Activated CD8-positive, alpha-beta T cell treated with anti-CD3 and anti-CD28 coated beads, Interleukin-2, amount 10 ng/mL, durations not matched to agents 7 days and 5 days (primary cell): ENCODE measurements at regions of chr19 and their contacts with region 1.

Region 1: DNA sequence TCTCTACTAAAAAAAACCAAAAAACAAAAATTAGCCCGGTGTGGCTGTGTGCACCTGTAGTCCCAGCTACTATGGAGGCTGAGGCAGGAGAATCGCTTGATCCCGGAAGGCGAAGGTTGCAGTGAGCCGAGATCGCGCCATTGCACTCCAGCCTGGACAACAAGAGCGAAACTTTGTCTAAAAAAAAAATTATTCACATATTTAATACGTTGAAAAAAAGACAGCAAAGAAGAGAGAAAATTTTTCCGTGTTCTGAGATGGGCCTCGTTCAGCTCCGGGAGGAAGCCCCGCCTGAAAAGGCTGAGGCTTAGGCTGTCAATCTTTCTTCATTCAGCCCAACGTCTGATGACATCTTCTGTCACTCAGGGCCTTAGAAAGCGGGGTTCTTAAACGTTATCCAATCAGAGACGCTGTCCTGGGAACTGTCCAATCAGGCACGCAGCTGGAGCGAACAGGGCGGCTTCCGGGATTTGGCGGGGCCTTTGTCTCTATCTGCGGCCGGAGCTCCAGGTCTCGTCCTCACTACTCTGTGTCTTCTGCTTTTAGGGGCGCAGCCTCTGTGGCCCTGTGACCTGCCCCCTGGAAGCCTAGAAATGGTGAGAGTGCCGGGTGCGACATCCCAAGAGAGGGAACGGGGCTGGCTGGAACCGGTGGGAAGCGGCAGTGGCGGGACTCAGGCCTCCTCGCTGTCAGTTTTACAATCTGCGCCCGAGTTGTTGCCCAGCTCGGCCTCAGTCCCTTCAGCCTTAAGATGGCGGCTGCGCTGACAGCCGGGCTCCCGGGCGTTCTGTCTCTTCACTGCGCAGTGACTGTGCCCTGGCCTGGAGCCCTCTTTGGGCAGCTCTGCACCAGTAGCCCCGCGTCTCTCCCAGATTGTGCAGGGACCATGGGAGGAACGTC is at the start of gene ZNF726:
- DNase-seq: peak; percentile 94
- ATAC-seq: peak; percentile 99
- H3K4me3 Mint-ChIP-seq: peak within 1 kb of the TSS; percentile 95
- H3K27ac Mint-ChIP-seq: peak within 1 kb of the TSS; percentile 99
- H3K4me1 Mint-ChIP-seq: peaks cover 23% of the 10 kb centered on the region
- H3K27me3 Mint-ChIP-seq: no peaks in the 10 kb centered on the region
- total RNA-seq, gene ZNF726: 16.6 to 16.7 TPM

Region 2: DNA sequence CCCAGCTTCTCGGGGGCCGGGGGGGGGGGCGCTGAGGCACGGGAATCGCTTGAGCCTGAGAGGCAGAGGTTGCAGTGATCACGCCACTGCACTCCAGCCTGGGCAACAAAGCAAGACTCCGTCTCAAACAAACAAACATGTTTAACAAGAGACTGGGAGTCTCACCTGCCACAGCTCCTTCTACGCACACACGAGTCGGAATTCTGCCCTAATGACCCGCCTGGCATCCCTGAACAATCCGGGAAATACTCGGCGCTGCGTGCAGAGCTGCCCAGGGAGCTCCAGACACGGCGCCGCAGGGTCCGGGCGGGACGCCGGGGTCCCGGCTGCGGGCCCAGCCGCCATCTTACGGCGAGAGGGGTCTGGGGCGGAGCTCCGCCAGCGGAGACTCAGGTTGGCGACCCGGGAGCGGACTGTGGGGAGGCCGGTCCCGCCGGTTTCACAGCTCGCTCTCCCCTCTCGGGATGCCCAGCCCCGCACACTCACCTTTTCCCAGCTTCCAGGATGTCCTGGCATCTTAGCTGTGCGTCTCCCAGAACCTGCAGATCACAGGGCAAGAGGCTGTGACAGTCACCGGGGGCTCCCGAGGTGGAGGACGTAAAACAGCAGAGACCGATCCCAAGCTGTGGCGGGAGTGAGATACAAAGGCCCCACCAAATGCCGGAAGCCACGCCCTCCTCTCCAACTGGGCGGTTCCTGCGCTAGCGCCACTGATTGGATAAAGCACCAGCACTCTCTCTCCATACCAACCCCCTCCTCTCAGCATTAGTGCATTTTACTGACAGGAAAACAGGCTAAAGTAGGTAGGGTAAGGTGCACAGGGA is 640.9 kb before region 1 on chr19:
- CTCF ChIA-PET with region 1: no interaction called
- POLR2A ChIA-PET with region 1: interaction called, 11 read pairs
- DNase-seq: peak; percentile 96
- ATAC-seq: peak; percentile 99
- H3K4me3 Mint-ChIP-seq: peak overlapping the region; percentile 95
- H3K27ac Mint-ChIP-seq: peak overlapping the region; percentile 95
- H3K4me1 Mint-ChIP-seq: peaks cover 28% of the 10 kb centered on the region
- H3K27me3 Mint-ChIP-seq: no peaks in the 10 kb centered on the region

Region 3: DNA sequence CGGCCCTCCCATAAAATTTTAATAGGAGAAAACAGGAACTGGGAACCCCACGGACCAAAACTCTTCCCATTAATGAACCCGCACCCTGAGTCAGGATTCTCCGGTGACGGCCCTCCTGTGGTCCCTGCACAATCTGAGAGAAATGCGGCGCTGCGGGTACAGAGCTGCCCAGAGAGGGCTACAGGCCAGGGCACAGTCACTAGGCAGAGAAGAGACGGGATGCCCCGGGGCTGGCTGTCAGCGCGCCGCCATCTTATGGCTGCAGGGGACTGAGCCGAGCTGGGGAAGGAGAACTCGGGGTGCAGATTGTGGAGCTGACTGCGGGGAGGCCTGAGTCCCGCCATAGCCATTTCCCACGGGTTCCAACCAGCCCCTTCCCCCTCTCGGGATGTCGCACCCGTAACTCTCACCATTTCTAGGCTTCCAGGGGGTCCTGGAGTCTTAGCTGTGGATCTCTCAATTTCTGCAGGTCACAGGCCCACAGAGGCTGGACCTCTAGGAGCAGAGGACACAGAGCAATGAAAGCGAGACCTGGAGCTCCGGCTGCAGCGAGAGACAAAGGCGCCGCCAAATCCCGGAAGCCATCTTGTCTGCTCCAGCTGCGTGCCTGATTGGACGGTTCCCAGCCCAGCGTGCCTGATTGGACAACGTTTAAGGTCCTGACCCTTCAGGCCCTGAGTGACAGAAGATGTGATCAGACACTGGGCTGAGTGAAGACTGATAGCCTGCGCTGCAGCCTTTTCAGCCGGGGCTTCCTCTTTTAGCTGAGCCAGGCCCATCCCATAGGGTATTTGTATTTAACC is 227.8 kb before region 1 on chr19 and contains the start of gene ZNF675:
- CTCF ChIA-PET with region 1: no interaction called
- POLR2A ChIA-PET with region 1: interaction called, 14 read pairs
- DNase-seq: peak; percentile 94
- ATAC-seq: peak; percentile 96
- H3K4me3 Mint-ChIP-seq: peak within 1 kb of the TSS; percentile 99
- H3K27ac Mint-ChIP-seq: peak within 1 kb of the TSS; percentile 99
- H3K4me1 Mint-ChIP-seq: peaks cover 28% of the 10 kb centered on the region
- H3K27me3 Mint-ChIP-seq: no peaks in the 10 kb centered on the region
- total RNA-seq, gene ZNF675: 23.0 to 23.6 TPM

Region 4: DNA sequence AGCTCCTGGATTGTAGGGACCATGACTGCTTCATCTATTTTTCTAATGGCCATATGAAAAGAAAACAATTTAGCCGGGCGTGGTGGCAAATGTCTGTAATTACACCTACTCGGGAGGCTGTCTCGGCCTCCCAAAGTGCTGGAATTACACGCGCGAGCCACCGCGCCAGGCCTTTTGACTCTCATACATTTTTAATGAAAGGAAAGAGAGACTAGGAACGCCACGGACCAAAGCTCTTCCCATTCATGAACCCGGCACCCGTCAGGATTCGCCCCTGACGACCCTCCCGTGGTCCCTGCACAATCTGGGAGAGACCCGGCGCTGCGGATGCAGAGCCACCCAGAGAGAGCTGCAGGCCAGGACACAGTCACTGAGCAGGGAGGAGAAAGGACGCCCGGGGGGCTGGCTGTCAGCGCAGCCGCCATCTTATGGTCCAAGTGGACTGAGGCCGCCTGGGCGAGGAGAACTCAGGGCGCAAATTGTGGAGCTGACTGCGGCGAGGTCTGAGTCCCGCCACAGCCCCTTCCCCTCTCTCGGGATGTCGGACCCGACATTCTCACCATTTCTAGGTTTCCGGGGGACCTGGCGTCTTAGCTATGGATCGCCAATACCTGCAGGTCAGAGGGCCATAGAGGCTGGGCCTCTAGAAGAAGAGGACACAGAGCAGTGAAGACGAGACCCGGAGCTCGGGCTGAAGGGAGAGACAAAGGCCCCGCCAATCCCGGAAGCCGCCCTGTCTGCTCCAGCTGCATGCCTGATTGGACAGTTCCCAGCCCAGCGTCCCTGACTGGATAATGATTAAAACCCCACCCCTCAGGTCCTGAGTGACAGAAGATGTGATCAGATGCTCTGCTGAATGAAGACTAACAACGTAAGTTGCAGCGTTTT is 156.2 kb before region 1 on chr19 and contains the start of gene ZNF681:
- CTCF ChIA-PET with region 1: no interaction called
- POLR2A ChIA-PET with region 1: interaction called, 10 read pairs
- DNase-seq: peak; percentile 94
- ATAC-seq: peak; percentile 93
- H3K4me3 Mint-ChIP-seq: peak within 1 kb of the TSS; percentile 96
- H3K27ac Mint-ChIP-seq: peak within 1 kb of the TSS; percentile 96
- H3K4me1 Mint-ChIP-seq: peaks cover 27% of the 10 kb centered on the region
- H3K27me3 Mint-ChIP-seq: no peaks in the 10 kb centered on the region
- total RNA-seq, gene ZNF681: 5.5 to 7.5 TPM

Region 5: GRCh38 chr19:24033301-24033962 is 118.8 kb after region 1 on chr19:
- CTCF ChIA-PET with region 1: no interaction called
- POLR2A ChIA-PET with region 1: interaction called, 26 read pairs
- DNase-seq: peak; percentile 88
- ATAC-seq: peak; percentile 99
- H3K4me3 Mint-ChIP-seq: peak overlapping the region; percentile 99
- H3K27ac Mint-ChIP-seq: peak overlapping the region; percentile 98
- H3K4me1 Mint-ChIP-seq: peaks cover 21% of the 10 kb centered on the region
- H3K27me3 Mint-ChIP-seq: no peaks in the 10 kb centered on the region

Region 6: GRCh38 chr19:24086974-24087595 is 172.4 kb after region 1 on chr19 and contains the start of gene ZNF254:
- CTCF ChIA-PET with region 1: no interaction called
- POLR2A ChIA-PET with region 1: interaction called, 11 read pairs
- DNase-seq: peak; percentile 94
- ATAC-seq: peak; percentile 100
- H3K4me3 Mint-ChIP-seq: peak within 1 kb of the TSS; percentile 97
- H3K27ac Mint-ChIP-seq: peak within 1 kb of the TSS; percentile 99
- H3K4me1 Mint-ChIP-seq: peaks cover 5% of the 10 kb centered on the region
- H3K27me3 Mint-ChIP-seq: no peaks in the 10 kb centered on the region
- total RNA-seq, gene ZNF254: 13.0 to 13.1 TPM